ENCODE measurements at regions of chr22 and their contacts with region 1.

Region 1: GRCh38 chr22:25465949-25466348 is 98.5 kb upstream of the GRK3 start:
- H3K4me3 Mint-ChIP-seq: no peak overlapping the region
- H3K27ac Mint-ChIP-seq: peak overlapping the region; percentile 60
- H3K4me1 Mint-ChIP-seq: peaks cover 17% of the 10 kb centered on the region
- H3K27me3 Mint-ChIP-seq: no peaks in the 10 kb centered on the region

Region 2: DNA sequence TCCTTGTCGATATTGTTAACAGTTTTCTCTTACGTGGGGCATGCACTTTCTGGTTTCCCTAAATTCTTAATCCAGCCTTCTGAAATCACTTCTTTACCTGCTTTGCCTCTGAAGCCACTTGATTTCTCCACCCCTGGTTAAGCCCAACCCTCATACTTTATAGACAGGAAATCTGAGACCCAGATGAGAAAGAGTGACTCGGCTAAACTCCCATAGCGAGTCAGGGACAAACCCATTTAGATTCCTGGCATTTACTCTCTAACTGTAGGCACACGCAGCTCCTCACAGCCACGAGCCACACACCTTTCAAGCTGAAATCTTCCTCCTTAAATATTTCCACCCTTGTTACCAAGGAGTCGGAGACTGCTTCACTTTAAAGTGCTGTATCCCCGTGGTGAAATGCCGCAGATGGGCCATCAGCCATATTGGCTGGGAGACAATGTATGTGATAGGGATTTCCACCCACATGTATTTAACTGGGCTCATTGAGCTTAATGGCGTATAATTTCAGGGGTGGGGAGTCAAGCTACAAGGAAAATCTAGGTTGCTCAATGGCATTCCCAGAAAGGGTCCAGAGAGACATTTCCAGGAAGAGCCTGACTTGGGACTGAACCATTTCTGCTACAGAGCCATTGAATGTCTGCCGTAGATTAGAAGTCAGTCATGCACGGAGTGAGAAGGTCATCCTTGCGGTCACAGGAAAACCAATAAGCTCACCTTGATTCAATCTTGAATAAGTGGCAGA is 48.7 kb after region 1 on chr22:
- intact Hi-C with region 1: no loop called
- H3K4me3 Mint-ChIP-seq: no peak overlapping the region
- H3K27ac Mint-ChIP-seq: no peak overlapping the region
- H3K4me1 Mint-ChIP-seq: no peaks in the 10 kb centered on the region
- H3K27me3 Mint-ChIP-seq: peaks cover 2% of the 10 kb centered on the region

Region 3: DNA sequence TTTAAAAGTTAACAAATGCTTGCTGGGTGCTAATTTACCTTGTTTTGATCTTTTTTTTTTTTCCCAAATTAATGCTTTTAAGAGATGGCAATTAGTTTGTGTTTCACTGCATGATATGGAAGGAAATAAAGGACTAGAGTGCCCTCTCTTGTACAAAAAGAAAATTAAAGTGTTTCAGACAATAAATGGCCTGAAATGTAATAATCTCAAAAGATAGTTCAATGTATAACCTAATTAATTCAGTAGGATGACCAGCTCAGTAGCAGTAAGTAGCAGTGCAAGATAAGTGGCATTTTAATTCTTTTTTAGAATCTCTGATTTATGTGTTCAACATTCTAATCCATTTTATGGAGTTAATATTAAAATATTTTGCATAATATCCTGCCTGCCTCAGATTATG is 236.1 kb after region 1 on chr22:
- intact Hi-C with region 1: loop called (anchors 1 kb)
- H3K4me3 Mint-ChIP-seq: no peak overlapping the region
- H3K27ac Mint-ChIP-seq: no peak overlapping the region
- H3K4me1 Mint-ChIP-seq: peaks cover 15% of the 10 kb centered on the region
- H3K27me3 Mint-ChIP-seq: no peaks in the 10 kb centered on the region

Region 4: DNA sequence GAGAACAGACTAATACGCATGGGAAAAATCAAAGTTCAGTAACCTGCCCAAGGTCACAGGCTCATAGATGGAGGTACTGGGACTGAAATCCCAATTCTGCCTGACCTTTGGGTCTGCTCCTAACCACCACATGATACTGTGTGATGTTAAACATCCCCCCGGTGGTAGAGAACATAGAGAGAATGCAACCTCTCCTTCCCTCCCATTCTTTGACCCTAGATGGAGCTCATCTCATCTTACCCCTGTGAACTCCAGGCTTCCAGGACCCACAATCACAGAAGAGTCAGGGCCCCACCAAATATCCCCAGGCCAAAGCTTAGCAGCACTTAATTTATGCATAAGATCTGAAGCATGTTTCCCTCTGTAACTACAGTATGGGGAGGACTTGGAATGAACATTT is 474.5 kb after region 1 on chr22:
- intact Hi-C with region 1: no loop called
- H3K4me3 Mint-ChIP-seq: no peak overlapping the region
- H3K27ac Mint-ChIP-seq: no peak overlapping the region
- H3K4me1 Mint-ChIP-seq: no peaks in the 10 kb centered on the region
- H3K27me3 Mint-ChIP-seq: peaks cover 20% of the 10 kb centered on the region

Measured in dendritic cell treated with granulocyte-macrophage colony-stimulating factor and Interleukin-4, amounts not matched to agents 40 ng/mL and 50 ng/mL, for 4 days (primary cell).